Common myeloid progenitor, CD34-positive (primary cell): ENCODE measurements at regions of chr1 and their contacts with region 1.

Region 1: DNA sequence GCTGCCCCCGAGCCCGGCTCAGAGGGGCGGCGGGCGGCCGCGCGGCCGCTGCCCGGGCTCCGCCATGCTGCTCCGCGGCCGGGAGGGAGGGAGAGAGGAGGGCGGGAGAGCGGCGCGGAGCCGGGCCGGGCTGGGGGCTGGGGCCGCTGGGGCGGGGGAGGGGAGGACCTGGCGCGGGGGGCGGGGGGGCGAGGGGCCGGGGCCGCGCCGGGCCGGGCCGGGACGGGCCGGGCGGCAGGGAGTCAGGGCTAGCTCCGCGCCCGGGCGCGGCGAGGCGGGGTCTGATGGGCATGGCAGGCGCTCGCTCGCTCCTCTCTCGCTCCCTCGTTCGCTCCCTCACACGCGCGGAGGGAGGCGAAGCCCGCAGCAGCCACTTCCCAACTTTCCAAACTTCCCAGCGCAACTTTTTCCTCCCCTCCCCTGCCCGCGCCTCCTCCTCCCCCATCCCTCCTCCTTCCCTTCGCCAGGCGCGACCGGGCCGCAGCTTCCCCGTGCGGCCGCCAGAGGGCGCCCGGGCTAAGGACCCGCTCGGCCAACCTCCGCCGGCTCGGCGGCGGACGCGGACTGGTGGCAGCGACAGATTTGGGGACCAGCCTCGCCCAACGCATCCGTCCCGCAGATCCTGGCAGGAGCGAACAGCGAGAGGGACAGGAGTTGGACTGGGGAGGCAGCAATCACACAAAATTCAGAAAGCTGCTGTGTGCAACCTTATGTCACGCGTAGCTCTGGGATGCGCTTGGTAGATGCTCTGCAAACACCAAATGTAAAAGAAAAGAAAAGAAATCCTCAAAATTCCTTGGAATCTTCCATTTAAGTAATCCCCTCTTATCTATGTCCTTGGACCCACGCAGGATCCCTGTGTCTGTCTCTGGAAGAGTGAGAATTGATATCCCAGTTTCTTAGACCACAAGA is at the start of gene TRABD2B:
- DNase-seq: peak; percentile 47 to 62 (median 61)
- H3K4me3 ChIP-seq: peak within 1 kb of the TSS in 5 of 7 experiments; percentile 45 to 76 (median 61)
- H3K27ac ChIP-seq: no peak within 1 kb of the TSS
- H3K4me1 ChIP-seq: peaks cover 0 to 14% (median 6%) of the 10 kb centered on the region in 4 experiments
- H3K27me3 ChIP-seq: peaks cover 12 to 72% (median 36%) of the 10 kb centered on the region in 5 experiments

Region 2: GRCh38 chr1:47972864-47973432 is 24.6 kb before region 1 on chr1:
- CTCF ChIA-PET with region 1: no interaction called
- POLR2A ChIA-PET with region 1: no interaction called
- DNase-seq: no peak
- H3K4me3 ChIP-seq: no peak overlapping the region
- H3K27ac ChIP-seq: no peak overlapping the region
- H3K4me1 ChIP-seq: no peaks in the 10 kb centered on the region
- H3K27me3 ChIP-seq: peaks cover 0 to 6% (median 0%) of the 10 kb centered on the region in 5 experiments

Region 3: DNA sequence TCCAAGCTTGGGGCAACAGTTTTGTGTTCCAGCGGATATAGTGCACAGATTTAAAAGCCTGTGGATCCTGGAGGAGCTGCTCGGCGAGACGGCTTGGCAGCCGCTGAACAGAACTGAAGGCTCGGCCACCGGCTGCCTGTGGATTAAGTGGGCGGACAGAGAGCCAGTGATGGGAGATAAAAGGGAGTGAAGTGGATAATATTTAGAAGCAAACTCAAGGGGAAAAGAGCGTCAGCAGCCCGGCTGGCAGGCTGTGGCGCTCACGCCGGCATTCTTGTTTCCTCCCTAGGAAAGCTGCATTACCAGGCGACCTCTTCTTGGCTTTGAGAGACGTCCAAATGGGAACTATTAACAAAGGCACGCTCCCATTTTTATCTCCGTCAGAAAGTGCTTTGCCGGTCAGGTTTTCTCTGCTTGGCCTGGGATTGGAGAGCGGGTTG is 10.8 kb before region 1 on chr1:
- CTCF ChIA-PET with region 1: interaction called, 14 read pairs
- POLR2A ChIA-PET with region 1: no interaction called
- DNase-seq: no peak
- H3K4me3 ChIP-seq: no peak overlapping the region
- H3K27ac ChIP-seq: no peak overlapping the region
- H3K4me1 ChIP-seq: peaks cover 0 to 17% (median 7%) of the 10 kb centered on the region in 4 experiments
- H3K27me3 ChIP-seq: peaks cover 6 to 86% (median 36%) of the 10 kb centered on the region in 5 experiments

Region 4: DNA sequence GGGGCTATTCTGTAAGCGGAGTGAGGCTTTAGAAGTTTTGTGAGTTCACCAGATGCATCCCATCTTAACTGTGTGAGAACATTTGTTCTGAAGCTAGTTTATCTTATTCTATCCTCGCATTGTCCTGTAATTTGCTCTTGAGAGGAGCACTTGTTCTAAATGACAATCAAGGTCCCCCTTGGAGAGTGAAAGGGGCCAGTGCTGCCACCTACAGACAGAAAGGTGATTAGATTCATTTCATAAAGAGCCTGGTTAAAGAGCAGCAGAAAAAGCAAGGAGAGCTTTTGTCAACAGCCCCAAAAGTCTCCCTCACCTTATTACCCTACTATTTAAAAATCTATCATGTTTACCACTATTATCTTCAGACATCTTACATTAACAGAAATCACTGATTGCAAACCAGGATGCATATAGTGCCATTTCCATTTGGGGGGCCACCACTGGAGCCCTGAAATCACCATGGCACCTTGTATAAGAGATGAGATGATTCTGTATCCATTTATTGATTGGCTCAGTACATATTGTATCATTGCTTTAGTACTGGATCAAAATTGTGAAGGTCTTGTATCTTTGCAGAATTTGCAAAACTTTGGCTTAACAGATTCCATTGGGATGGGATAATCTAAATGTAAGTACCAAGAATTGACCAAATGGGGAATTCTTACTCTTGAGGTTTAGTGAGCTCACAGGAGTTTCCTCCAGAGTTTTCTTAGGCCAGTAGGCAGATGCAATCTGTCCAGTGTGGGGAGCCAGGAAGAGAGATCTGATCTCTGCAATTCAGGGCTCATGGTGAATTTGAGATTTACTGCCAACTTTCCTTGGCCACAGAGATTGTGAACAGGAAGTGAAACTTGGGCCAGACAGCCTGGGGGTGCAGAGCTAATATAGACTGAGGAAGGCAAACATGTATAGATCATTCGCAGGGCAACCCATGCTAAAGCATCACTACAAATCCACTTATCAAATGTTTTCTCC is 63.9 kb after region 1 on chr1:
- CTCF ChIA-PET with region 1: interaction called, 11 read pairs
- POLR2A ChIA-PET with region 1: no interaction called
- DNase-seq: peak; percentile 41 to 65 (median 60)
- H3K4me3 ChIP-seq: no peak overlapping the region
- H3K27ac ChIP-seq: no peak overlapping the region
- H3K4me1 ChIP-seq: peaks cover 0 to 17% (median 5%) of the 10 kb centered on the region in 4 experiments
- H3K27me3 ChIP-seq: peaks cover 0 to 3% (median 0%) of the 10 kb centered on the region in 5 experiments